ENCODE measurements at regions of chr6 and their contacts with region 1.

Region 1: DNA sequence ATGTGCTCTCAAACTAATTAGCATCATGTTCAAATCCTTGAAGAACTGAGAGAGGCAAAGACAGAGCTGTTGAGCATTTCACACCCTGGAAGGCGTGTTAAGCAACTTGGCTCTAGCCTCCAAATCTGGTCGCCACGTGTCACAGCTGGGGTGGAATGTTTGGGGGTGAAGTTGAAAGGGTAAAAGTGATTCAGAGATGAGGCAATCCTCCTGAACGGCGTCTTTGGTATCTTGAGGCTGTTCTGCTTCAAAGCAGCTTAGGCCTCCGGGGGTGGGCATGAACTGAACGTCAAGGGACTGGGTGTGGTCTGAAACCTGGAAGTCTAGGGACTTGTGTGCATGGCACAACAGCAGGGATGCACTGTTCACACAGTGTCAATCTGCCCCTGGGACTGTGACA is 62.3 kb downstream of the TRAM2 start:
- DNase-seq: no peak
- CTCF ChIP-seq: no peak

Region 2: GRCh38 chr6:52176550-52176949 is 338.0 kb before region 1 on chr6:
- CTCF ChIA-PET with region 1: no interaction called
- POLR2A ChIA-PET with region 1: no interaction called
- DNase-seq: no peak
- CTCF ChIP-seq: no peak

Region 3: GRCh38 chr6:52497652-52498408 is 16.7 kb before region 1 on chr6:
- CTCF ChIA-PET with region 1: interaction called, 10 read pairs
- POLR2A ChIA-PET with region 1: no interaction called
- DNase-seq: peak; percentile 63
- CTCF ChIP-seq: no peak

Region 4: GRCh38 chr6:52584203-52584602 is 69.7 kb after region 1 on chr6:
- CTCF ChIA-PET with region 1: no interaction called
- POLR2A ChIA-PET with region 1: no interaction called
- DNase-seq: no peak
- CTCF ChIP-seq: no peak

Region 5: GRCh38 chr6:52640170-52640569 is 125.7 kb after region 1 on chr6:
- CTCF ChIA-PET with region 1: no interaction called
- POLR2A ChIA-PET with region 1: no interaction called
- DNase-seq: no peak
- CTCF ChIP-seq: no peak

Region 6: DNA sequence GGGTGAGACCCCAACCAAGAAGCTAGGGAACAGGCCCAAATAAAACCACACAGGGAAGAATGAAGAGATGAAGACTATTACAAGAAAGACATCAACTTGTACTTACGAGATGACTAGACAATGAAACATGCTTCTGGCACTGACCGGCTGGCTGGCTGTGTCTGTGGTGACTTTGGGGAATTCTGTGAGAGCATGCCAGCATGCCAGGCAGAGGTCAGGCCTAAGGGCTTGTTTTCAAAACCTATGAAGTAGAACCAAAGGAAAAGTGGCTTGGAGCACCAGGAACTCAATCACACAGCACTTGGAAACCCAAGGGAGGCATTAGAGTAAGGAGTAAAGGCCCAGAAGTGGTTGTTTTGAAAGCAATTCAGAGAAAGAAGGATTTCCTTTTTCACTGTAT is 423.4 kb after region 1 on chr6:
- CTCF ChIA-PET with region 1: no interaction called
- POLR2A ChIA-PET with region 1: no interaction called
- DNase-seq: no peak
- CTCF ChIP-seq: no peak